ENCODE measurements at regions of chr1 and their contacts with region 1.

Region 1: DNA sequence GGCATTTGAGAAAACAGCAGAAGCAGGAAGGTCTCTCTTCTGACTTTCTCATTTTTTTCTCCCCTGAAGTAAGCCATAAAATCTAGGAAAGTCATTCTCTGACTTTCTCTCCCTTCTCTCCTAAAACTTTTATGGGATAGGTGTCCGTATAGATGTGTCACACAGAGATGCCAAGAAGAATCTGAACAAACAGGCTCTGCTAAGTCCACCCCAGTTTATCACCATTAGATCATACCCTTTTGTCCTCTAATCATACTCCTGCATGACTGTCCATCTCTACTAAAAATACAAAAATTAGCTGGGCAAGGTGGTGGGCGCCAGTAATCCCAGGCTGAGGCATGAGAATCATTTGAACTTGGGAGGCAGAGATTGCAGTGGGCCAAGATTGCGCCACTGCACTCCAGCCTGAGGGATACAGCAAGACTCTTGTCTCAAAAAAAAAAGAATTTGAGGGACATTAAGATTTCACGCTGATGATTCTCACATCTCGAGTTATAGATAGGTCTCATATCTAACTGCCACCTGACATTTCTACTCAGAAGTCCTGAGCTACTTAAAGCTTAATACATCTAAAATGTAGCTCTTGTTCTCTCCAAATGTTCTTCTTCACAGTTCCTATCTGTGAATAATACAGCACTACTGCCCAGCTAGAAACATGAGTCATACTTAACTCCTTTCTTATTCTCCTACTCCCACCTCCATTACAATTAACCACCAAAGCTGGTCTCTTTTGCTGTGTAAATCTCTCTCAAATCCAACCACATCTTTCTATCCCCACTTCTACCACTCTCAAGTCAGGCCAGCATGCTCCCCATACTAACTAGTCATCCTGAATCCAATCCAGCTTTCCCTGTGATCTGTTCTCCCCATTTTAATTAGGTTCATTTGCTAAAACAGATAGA is 47.7 kb downstream of the ZNF644 start:
- DNase-seq: no peak

Region 2: GRCh38 chr1:90850898-90851710 is 123.0 kb before region 1 on chr1:
- intact Hi-C with region 1: loop called (anchors 10 kb)
- DNase-seq: peak; percentile 91

Region 3: GRCh38 chr1:90936061-90936460 is 38.1 kb before region 1 on chr1:
- intact Hi-C with region 1: no loop called
- DNase-seq: no peak

Region 4: GRCh38 chr1:91021686-91022517 is 47.8 kb after region 1 on chr1 and contains the start of gene ZNF644:
- intact Hi-C with region 1: loop called (anchors 5 kb)
- DNase-seq: peak; percentile 95
- total RNA-seq, gene ZNF644: 42.6 TPM

Region 5: GRCh38 chr1:91189096-91189495 is 214.9 kb after region 1 on chr1:
- intact Hi-C with region 1: no loop called
- DNase-seq: no peak